ENCODE measurements at regions of chr11 and their contacts with region 1.

Region 1: DNA sequence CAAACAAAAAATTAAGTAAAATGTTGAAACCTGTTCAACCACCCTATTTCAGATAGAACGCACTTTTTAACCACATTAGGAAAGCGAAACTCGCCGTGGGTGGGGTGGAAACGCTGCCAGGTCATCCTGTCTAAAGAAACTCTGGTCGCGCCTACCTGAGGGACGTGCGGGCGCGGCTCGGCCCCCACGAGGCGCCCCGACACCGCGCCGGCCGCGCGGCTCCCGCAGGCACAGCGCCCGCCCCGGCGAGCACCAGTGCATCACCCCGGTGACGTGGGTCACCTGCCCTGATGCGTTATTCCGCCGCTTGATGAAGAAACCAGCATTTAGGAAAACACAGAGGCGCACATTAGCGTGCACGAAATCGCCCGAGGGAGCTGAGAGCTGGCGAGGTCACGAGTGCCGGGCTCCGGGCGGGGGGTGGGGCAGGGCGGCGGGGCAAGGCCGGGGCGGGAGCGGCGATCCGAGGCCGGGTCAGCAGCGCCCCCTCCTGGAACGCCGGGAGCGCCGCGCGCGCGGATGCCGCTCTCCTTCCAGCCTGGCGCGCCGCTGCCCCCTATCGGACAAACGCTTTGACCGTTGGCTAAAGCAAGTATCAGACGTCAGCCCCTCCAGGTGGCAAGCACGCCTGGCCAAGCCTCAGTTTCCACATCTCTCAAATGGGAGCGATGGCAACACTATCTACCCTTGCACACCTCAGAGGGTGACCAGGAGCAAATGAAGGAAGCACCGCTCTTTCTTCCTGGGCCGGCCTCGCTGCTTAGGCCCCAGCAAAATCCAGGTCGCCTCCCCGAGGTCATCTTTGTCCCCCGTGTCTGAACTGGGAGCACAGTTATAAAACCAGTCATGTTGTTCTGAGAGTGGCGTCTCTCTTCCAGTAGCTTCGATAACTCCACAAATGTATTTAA is 15.7 kb upstream of the SNX32 start:
- DNase-seq: peak; percentile 94
- ATAC-seq: peak; percentile 85
- H3K4me3 ChIP-seq: peak overlapping the region; percentile 77
- H3K27ac ChIP-seq: peak overlapping the region; percentile 52
- H3K4me1 ChIP-seq: peaks cover 4% of the 10 kb centered on the region; the same call in 1 of the 2 replicates
- H3K27me3 ChIP-seq: no peaks in the 10 kb centered on the region
- CTCF ChIP-seq: peak; percentile 98

Region 2: DNA sequence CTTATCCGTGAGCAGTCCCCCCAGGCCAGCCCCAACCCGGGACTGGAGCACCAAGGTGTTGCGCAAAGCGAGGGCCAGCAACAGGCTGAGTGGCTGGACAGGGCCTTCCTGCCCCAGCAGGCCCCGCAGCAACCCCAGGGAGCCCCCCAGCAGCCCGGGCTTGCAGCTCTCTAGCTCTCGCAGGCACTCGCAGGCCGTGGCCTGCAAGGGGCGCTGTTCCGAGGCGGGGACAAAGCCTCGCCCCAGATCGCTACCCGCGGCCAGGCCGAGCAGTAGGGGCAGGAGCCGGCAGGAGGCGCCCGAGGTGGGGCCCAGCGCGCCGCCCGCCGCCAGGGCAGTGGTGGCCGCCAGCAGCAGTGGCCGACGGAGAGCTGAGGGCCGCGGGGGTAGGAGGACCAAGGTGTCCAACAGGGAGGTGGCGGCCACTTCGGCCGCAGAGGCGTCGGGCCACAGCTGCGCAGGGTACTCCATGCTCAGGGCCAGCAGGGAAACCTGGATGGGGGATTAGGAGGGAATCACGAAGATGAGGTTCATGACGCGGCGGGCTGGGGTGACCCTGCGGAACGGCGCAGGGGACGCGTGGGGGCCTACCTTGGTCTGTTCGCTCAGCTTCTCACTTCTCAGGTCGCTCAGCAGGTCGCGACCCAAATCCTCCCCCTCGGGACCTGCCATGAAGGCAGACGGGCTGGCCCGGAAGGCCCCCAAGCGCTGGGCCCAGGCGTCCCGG is 38.1 kb before region 1 on chr11:
- CTCF ChIA-PET with region 1: interaction called, 44 read pairs
- POLR2A ChIA-PET with region 1: interaction called, 5 read pairs
- intact Hi-C with region 1: loop called (anchors 1 kb)
- DNase-seq: peak; percentile 91
- ATAC-seq: peak; percentile 83
- H3K4me3 ChIP-seq: peak overlapping the region; percentile 84
- H3K27ac ChIP-seq: peak overlapping the region; percentile 44
- H3K4me1 ChIP-seq: peaks cover 23% of the 10 kb centered on the region
- H3K27me3 ChIP-seq: no peaks in the 10 kb centered on the region
- CTCF ChIP-seq: peak; percentile 99

Region 3: DNA sequence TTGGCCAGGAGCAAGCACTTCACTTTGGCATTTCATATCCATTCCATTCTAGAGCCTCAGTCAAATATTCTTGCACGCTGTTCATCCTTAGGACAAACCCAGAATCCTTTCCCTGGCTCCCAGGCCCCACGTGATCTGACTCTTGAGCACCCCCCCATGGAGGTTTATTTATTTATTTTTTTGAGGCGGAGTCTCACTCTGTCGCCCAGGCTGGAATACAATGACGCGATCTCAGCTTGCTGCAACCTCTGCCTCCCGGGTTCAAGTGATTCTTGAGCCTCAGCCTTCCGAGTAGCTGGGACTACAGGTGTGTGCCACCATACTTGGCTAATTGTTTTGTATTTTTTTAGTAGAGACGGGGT is 114.5 kb after region 1 on chr11:
- CTCF ChIA-PET with region 1: no interaction called
- POLR2A ChIA-PET with region 1: no interaction called
- intact Hi-C with region 1: no loop called
- DNase-seq: peak; percentile 42
- ATAC-seq: no peak
- H3K4me3 ChIP-seq: no peak overlapping the region
- H3K27ac ChIP-seq: no peak overlapping the region
- H3K4me1 ChIP-seq: no peaks in the 10 kb centered on the region
- H3K27me3 ChIP-seq: no peaks in the 10 kb centered on the region
- CTCF ChIP-seq: no peak; the same call in 1 of the 2 replicates

Measured in PC-3 (cell line).